Endothelial cell of umbilical vein (primary cell): ENCODE measurements at regions of chr11 and their contacts with region 1.

Region 1: GRCh38 chr11:94543695-94544645 is at the start of gene FUT4:
- DNase-seq: peak; percentile 80
- H3K4me3 ChIP-seq: peak within 1 kb of the TSS; percentile 11 to 57 (median 41)
- H3K27ac ChIP-seq: peak within 1 kb of the TSS; percentile 55
- H3K4me1 ChIP-seq: peaks cover 12% of the 10 kb centered on the region
- H3K27me3 ChIP-seq: peaks cover 4 to 9% of the 10 kb centered on the region in 2 experiments
- CTCF ChIP-seq: no peak
- POLR2A ChIP-seq: peak; percentile 76
- total RNA-seq, gene FUT4: 4.4 and 5.3 TPM in 2 replicates

Region 2: DNA sequence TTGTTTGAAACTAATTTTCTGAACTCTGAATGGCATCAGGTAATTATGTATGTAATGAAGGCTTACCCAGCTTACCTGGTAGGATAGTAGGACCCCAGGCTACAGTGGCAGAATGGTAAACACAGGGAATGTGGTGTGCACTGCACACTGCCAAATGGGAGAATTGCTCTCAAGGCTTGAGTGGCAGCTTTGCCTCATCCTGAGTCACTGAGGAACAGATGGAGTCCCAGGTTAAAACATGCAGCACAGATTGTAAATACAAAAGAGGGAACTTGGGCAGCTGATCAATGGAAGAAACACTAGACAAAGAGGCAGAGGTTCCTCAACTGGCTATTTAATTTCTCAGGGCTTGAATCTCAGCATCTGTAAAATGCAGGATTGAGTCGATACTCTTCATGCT is 167.1 kb before region 1 on chr11:
- CTCF ChIA-PET with region 1: no interaction called
- POLR2A ChIA-PET with region 1: no interaction called
- dilution Hi-C with region 1: no loop called
- intact Hi-C with region 1: no loop called
- DNase-seq: no peak
- H3K4me3 ChIP-seq: no peak overlapping the region
- H3K27ac ChIP-seq: no peak overlapping the region
- H3K4me1 ChIP-seq: no peaks in the 10 kb centered on the region
- H3K27me3 ChIP-seq: no peaks in the 10 kb centered on the region
- CTCF ChIP-seq: no peak
- POLR2A ChIP-seq: no peak

Region 3: GRCh38 chr11:94602430-94603372 is 58.7 kb after region 1 on chr11:
- CTCF ChIA-PET with region 1: interaction called, 3 read pairs
- POLR2A ChIA-PET with region 1: no interaction called
- dilution Hi-C with region 1: no loop called
- intact Hi-C with region 1: loop called (anchors 1 kb)
- DNase-seq: peak; percentile 66
- H3K4me3 ChIP-seq: no peak overlapping the region
- H3K27ac ChIP-seq: no peak overlapping the region
- H3K4me1 ChIP-seq: no peaks in the 10 kb centered on the region
- H3K27me3 ChIP-seq: no peaks in the 10 kb centered on the region
- CTCF ChIP-seq: peak; percentile 31 to 40
- POLR2A ChIP-seq: no peak

Region 4: GRCh38 chr11:94731880-94732601 is 188.1 kb after region 1 on chr11:
- CTCF ChIA-PET with region 1: no interaction called
- POLR2A ChIA-PET with region 1: no interaction called
- dilution Hi-C with region 1: no loop called
- intact Hi-C with region 1: loop called (anchors 5 kb)
- DNase-seq: peak; percentile 38
- H3K4me3 ChIP-seq: no peak overlapping the region
- H3K27ac ChIP-seq: peak overlapping the region; percentile 79
- H3K4me1 ChIP-seq: peaks cover 35% of the 10 kb centered on the region
- H3K27me3 ChIP-seq: no peaks in the 10 kb centered on the region
- CTCF ChIP-seq: no peak
- POLR2A ChIP-seq: no peak